ENCODE measurements at regions of chr19 and their contacts with region 1.

Region 1: DNA sequence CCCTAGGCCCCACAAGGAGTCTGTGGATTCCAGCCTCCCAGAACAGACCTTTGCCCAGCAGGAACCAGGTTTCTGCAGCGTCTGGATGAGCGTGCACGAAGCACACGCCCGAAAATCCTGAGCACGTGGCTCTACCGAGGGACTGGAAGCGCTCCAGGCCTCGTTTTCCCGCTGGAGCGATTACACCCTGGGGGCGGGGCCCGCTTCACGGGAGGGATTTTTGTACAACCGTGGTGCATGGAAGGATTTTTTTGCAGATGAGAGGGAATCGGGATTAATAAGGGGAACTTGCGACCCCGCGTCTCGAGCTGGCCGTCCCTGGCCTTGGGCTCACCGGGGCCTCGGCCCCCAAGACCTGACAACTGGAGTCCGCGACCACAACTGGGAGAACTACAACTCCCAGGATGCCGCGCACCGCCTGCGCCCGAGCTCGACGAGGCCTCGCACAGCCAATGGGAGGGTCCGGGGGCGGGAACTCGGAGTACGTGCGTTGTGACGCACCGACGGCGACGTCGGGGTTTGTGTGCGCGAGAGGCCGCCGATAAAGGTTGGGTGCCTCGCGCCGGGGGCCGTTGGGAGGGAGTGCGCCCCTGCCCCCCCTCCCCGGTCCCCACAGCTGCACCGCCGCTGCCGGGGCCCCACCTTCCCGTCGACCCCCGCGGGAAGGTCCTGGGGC is at the start of gene ZNF628:
- DNase-seq: peak; percentile 99
- ATAC-seq: peak; percentile 96
- H3K4me3 Mint-ChIP-seq: peak within 1 kb of the TSS; percentile 84
- H3K27ac Mint-ChIP-seq: peak within 1 kb of the TSS; percentile 88
- H3K4me1 Mint-ChIP-seq: peaks cover 32% of the 10 kb centered on the region
- H3K27me3 Mint-ChIP-seq: no peaks in the 10 kb centered on the region
- total RNA-seq, gene ZNF628: 5.6 to 6.8 TPM

Region 2: DNA sequence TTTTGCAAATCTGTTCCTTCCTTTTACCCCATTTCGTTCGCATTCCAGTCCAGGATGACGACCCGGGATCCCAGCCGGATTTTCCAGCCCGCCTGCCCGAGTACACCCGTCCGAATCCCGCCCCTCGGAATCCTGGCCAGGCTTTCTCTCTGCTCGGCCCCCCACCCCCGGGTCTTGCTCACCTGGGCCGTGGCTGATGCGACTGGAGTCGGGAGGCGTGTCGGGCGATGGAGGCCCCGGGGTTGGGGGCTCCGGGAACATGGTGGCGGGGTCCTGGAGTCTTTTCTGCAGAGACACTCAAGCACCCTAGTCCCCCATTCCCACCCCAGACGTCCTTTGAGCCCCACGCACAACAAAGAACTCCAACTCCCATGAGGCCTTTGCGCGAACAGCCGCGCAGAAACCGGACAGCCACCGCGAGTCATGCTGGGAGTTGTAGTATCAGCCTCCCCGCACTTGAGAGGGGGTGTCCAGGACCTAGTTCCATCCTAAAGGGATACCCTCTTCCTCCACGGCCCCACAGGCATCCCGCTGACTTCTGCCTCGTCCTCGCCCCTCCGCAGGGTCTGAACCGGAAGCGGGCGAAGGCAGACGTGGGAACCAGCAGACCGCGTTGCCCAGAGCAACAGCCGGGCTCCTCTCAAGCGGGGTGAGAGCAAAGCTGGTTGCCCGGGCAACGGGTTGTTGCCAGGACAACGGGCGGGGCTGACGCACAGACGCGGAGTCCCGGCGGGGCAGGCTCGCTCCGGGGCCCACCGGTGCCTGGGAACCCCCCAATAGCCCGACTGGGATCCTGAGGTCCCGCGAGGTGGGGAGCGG is 297.2 kb before region 1 on chr19:
- CTCF ChIA-PET with region 1: no interaction called
- POLR2A ChIA-PET with region 1: no interaction called
- intact Hi-C with region 1: loop called in 1 of 2 experiments (anchors 1 kb)
- DNase-seq: peak; percentile 95
- ATAC-seq: peak; percentile 81
- H3K4me3 Mint-ChIP-seq: peak overlapping the region; percentile 61
- H3K27ac Mint-ChIP-seq: no peak overlapping the region
- H3K4me1 Mint-ChIP-seq: peaks cover 20% of the 10 kb centered on the region
- H3K27me3 Mint-ChIP-seq: peaks cover 49% of the 10 kb centered on the region

Region 3: GRCh38 chr19:55227241-55228014 is 248.8 kb before region 1 on chr19:
- CTCF ChIA-PET with region 1: no interaction called
- POLR2A ChIA-PET with region 1: no interaction called
- intact Hi-C with region 1: no loop called
- DNase-seq: no peak
- ATAC-seq: no peak
- H3K4me3 Mint-ChIP-seq: no peak overlapping the region
- H3K27ac Mint-ChIP-seq: no peak overlapping the region
- H3K4me1 Mint-ChIP-seq: no peaks in the 10 kb centered on the region
- H3K27me3 Mint-ChIP-seq: no peaks in the 10 kb centered on the region

Region 4: GRCh38 chr19:55407800-55408532 is 68.3 kb before region 1 on chr19:
- CTCF ChIA-PET with region 1: no interaction called
- POLR2A ChIA-PET with region 1: interaction called, 6 read pairs
- intact Hi-C with region 1: loop called (anchors 1 kb)
- DNase-seq: peak; percentile 98
- ATAC-seq: peak; percentile 96
- H3K4me3 Mint-ChIP-seq: peak overlapping the region; percentile 90
- H3K27ac Mint-ChIP-seq: peak overlapping the region; percentile 96
- H3K4me1 Mint-ChIP-seq: peaks cover 22% of the 10 kb centered on the region
- H3K27me3 Mint-ChIP-seq: no peaks in the 10 kb centered on the region

Region 5: DNA sequence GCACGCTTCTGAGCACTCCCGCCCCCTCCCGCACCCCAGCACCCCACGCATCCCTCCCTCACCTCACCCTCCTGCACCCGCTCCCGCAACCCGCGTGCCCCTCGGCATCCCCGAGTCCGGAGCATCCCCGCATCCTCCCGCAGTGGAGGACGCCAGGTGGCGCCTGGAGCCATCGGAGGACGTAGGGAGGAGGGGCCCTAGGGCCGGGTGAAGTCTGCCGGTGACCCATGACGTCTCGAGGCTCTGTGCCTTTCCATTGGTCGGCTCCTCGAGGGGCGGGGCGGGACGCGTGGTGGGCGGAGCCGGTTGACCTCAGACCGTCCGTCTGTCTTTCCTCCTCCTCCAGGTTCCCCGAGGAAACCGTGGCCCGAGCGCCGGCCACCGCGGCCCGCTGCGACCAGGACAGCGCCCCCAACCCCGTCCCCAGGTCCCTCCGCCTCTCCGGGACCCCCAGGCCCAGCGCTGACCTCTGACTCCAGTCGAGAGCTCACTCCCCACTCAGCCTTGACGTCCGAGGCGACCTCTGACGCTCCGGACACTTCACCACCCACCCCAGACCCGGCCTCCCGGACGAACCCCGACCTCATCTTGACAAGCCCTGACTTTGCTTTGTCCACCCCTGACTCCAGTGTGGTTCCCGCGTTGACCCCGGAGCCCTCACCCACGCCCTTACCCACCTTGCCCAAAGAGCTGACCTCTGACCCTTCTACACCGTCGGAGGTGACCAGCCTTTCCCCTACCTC is 40.8 kb after region 1 on chr19:
- CTCF ChIA-PET with region 1: no interaction called
- POLR2A ChIA-PET with region 1: no interaction called
- intact Hi-C with region 1: loop called in 1 of 2 experiments (anchors 1 kb)
- DNase-seq: peak; percentile 96
- ATAC-seq: peak; percentile 100
- H3K4me3 Mint-ChIP-seq: peak overlapping the region; percentile 54
- H3K27ac Mint-ChIP-seq: peak overlapping the region; percentile 9
- H3K4me1 Mint-ChIP-seq: peaks cover 3% of the 10 kb centered on the region
- H3K27me3 Mint-ChIP-seq: no peaks in the 10 kb centered on the region

Region 6: GRCh38 chr19:55624109-55625003 is 148.1 kb after region 1 on chr19 and contains the start of gene ZNF784:
- CTCF ChIA-PET with region 1: no interaction called
- POLR2A ChIA-PET with region 1: no interaction called
- intact Hi-C with region 1: loop called in 1 of 2 experiments (anchors 1 kb)
- DNase-seq: peak; percentile 97
- ATAC-seq: peak; percentile 70
- H3K4me3 Mint-ChIP-seq: peak within 1 kb of the TSS; percentile 79
- H3K27ac Mint-ChIP-seq: peak within 1 kb of the TSS; percentile 85
- H3K4me1 Mint-ChIP-seq: peaks cover 53% of the 10 kb centered on the region
- H3K27me3 Mint-ChIP-seq: no peaks in the 10 kb centered on the region
- total RNA-seq, gene ZNF784: 3.2 to 4.3 TPM

Region 7: GRCh38 chr19:55653758-55654539 is 177.7 kb after region 1 on chr19:
- CTCF ChIA-PET with region 1: no interaction called
- POLR2A ChIA-PET with region 1: interaction called, 4 read pairs
- intact Hi-C with region 1: loop called in 1 of 2 experiments (anchors 1 kb)
- DNase-seq: peak; percentile 99
- ATAC-seq: peak; percentile 84
- H3K4me3 Mint-ChIP-seq: peak overlapping the region; percentile 86
- H3K27ac Mint-ChIP-seq: peak overlapping the region; percentile 98
- H3K4me1 Mint-ChIP-seq: peaks cover 37% of the 10 kb centered on the region
- H3K27me3 Mint-ChIP-seq: no peaks in the 10 kb centered on the region

Region 8: DNA sequence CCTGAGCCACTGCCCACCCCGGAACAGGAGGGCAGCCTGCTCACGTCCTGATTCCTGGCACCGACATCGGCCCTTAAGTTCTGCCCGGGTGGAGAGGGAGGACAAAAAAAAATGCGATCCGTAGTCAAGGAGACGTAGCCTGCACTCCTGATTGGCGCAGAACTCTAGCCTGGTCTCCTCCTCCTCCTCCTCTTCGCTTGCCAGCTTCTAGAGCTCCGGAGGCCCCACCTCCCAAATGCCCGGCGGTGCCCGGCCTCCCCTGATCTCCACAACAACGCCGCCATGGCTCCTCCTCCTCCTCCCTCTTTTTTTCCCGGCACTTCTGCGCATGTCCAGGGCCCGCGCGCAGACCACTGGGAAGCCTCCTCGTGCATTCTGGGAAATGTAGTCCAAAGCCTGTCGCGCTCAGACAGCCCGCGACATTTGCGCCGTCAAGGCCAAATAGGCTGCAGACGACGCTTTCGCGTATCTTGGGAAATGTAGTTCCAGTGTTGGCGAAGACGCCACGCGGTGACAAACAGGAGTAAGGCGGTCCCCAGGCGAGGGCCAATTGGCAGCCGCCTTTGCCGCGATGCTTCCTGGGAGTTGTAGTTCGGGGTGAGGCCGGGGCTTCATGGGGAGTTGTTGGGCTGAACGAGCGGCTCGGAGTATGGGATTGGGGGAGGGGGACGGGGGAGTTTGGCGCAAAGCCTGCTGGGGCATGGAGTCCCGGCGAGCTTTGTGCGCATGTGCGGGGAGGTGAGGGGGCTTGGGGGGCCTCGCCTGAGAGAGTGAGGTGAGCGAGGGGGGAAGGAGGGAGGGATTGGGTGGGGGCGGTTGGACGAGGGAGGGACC is 664.6 kb after region 1 on chr19 and contains the start of gene ZNF444:
- CTCF ChIA-PET with region 1: no interaction called
- POLR2A ChIA-PET with region 1: no interaction called
- intact Hi-C with region 1: loop called in 1 of 2 experiments (anchors 2 kb)
- DNase-seq: peak; percentile 99
- ATAC-seq: peak; percentile 90
- H3K4me3 Mint-ChIP-seq: peak within 1 kb of the TSS; percentile 89
- H3K27ac Mint-ChIP-seq: peak within 1 kb of the TSS; percentile 94
- H3K4me1 Mint-ChIP-seq: peaks cover 31% of the 10 kb centered on the region
- H3K27me3 Mint-ChIP-seq: no peaks in the 10 kb centered on the region
- total RNA-seq, gene ZNF444: 29.2 to 32.2 TPM

Measured in activated CD4-positive, alpha-beta T cell treated with anti-CD3 and anti-CD28 coated beads for 36 hours (primary cell).